AG04450 (cell line): ENCODE measurements at regions of chr1 and their contacts with region 1.

Region 1: GRCh38 chr1:44775078-44775929 is at the start of gene RPS8:
- DNase-seq: peak; percentile 76
- H3K4me3 ChIP-seq: peak within 1 kb of the TSS; percentile 92
- H3K27ac ChIP-seq: peak within 1 kb of the TSS; percentile 96
- H3K27me3 ChIP-seq: no peaks in the 10 kb centered on the region
- CTCF ChIP-seq: no peak
- polyA plus RNA-seq, gene RPS8: 2,661 and 2,755 TPM in 2 replicates

Region 2: DNA sequence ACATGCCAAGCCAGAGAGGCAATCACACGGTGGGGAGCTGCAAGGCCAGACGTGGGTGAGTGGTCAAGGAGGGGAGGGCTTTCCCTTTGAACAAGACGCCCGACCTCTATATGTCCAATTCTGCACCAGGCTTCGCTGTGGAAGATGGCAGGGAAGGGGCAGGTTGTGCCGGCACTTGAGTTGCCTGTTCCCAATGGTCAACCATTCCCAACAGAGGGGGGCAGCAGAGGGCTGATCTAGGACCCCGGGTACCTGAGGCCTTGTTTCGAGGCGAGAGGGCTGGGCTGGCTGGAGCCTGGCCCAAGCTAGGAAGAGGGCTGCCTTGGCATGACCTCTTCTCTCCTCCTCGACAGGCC is 165.9 kb before region 1 on chr1:
- CTCF ChIA-PET with region 1: no interaction called
- POLR2A ChIA-PET with region 1: no interaction called
- DNase-seq: no peak
- H3K4me3 ChIP-seq: no peak overlapping the region
- H3K27ac ChIP-seq: no peak overlapping the region
- H3K27me3 ChIP-seq: peaks cover 20% of the 10 kb centered on the region
- CTCF ChIP-seq: peak; percentile 74

Region 3: DNA sequence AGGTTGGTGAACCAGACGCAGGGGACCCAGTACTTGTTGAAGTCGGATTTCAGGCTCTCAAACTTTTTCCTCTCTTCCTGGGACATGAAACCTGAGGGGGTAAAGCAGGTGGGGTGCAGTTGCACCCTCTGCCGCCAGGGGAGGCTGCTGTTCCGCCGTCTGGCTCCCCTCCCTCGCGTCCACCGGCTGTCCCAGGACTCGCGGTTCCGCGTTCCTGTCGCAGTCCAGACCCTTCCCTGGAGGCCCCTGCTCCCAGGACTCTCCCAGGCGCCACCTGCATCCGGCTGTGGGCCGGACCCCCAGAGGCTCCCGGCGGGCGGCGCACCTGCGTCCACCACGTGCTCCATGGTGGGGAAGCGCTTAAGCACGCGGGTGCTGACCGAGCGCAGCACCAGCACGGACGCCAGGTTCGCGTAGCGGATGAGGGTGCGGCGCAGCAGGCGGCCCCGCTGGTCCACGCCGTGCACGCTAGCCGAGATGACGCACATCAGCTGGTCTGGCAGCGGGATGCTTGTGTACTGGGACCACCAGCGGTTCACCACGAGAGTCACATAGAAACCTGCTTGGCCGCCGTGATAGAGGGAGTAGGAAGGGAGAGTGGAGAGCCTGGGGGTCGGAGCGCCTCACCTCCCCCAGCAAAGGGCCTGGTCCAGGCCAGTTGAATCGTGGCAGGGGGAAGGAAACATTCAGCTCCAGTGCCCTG is 11.0 kb after region 1 on chr1:
- CTCF ChIA-PET with region 1: interaction called, 4 read pairs
- POLR2A ChIA-PET with region 1: interaction called, 16 read pairs
- DNase-seq: no peak
- H3K4me3 ChIP-seq: peak overlapping the region; percentile 50
- H3K27ac ChIP-seq: no peak overlapping the region
- H3K27me3 ChIP-seq: peaks cover 2% of the 10 kb centered on the region
- CTCF ChIP-seq: peak; percentile 96

Region 4: DNA sequence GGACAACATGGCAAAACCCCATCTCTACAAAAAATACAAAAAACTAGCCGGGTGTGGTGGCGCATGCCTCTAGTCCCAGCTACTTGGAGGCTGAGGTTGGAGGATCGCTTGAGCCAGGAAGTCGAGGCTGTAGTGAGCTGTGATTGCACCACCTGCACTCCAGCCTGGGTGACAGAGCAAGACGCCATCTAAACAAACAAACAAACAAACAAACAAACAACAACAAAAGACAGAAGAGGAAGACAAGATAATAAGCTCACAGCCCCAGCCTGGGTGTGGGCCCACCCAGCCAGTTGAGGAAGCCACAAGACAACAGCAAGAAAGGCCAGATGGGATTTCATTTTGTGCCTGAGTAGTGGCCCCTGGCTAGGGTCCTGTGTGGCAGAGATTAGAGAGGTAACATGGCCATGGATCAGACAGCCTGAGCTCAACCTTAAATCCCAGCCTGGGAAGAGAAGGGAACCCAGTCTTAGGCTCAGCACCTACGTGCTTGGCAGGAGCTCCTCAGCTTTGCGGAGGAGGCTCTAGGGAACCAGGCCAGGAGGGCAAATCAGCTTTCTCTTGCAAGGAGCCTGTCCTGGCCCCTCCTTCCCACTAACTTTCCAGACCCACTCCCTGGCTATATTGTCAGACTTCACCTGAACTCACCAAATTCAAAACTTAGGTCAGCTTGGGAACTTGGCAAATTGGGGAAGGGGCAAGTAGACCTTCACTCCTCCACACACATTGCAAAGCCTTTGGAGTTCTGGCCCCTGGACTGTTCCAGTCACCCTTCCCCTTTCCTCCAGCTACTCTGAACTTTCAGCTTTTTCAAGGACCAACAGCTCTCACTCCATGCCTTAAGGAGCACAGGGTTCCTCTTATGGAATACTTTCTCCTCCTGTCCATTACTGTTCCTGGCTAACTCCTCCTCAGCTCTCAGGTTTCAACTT is 17.7 kb after region 1 on chr1:
- CTCF ChIA-PET with region 1: interaction called, 4 read pairs
- POLR2A ChIA-PET with region 1: interaction called, 16 read pairs
- DNase-seq: no peak
- H3K4me3 ChIP-seq: no peak overlapping the region
- H3K27ac ChIP-seq: no peak overlapping the region
- H3K27me3 ChIP-seq: no peaks in the 10 kb centered on the region
- CTCF ChIP-seq: no peak

Region 5: GRCh38 chr1:44799770-44800584 is 24.7 kb after region 1 on chr1 and contains the start of gene PLK3:
- CTCF ChIA-PET with region 1: interaction called, 6 read pairs
- POLR2A ChIA-PET with region 1: interaction called, 23 read pairs
- DNase-seq: peak; percentile 95
- H3K4me3 ChIP-seq: peak within 1 kb of the TSS; percentile 85
- H3K27ac ChIP-seq: peak within 1 kb of the TSS; percentile 92
- H3K27me3 ChIP-seq: no peaks in the 10 kb centered on the region
- CTCF ChIP-seq: peak; percentile 93
- polyA plus RNA-seq, gene PLK3: 14.2 and 20.1 TPM in 2 replicates

Region 6: DNA sequence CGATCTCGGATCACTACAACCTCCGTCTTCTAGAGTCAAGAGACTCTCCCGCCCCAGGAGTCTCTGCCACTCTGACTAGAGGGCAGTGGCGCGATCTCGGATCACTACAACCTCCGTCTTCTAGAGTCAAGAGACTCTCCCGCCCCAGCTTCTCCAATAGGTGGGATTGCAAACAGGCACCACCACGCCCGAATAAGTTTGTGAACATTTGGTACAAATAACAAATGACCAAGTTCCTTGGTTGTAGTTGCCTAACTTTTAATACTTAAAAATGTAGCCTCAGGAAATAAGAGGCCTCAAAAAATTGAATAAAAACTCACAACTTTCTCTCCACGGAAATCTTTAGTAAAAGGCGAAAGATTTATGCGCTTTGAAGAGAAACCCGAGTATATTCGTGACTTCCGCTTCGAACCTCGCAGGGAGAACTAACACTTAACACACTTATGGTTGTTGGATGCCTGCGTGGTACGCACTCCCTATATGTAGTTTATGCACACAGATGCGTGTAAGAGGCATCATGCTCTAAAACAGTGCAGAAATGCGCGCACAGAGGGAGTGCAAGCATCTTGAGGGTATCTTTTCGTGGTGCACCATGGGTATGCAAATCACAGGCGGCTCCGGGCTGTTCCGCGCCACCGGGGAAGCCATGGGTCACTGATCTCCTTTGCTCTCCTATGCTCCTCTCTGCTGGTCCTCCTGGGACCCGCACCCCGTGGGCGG is 44.5 kb after region 1 on chr1:
- CTCF ChIA-PET with region 1: no interaction called
- POLR2A ChIA-PET with region 1: interaction called, 22 read pairs
- DNase-seq: peak; percentile 89
- H3K4me3 ChIP-seq: peak overlapping the region; percentile 62
- H3K27ac ChIP-seq: peak overlapping the region; percentile 99
- H3K27me3 ChIP-seq: no peaks in the 10 kb centered on the region
- CTCF ChIP-seq: no peak